PC-3 (cell line): ENCODE measurements at regions of chr6 and their contacts with region 1.

Region 1: GRCh38 chr6:148342357-148343046 is at the start of gene SASH1:
- DNase-seq: peak; percentile 75
- ATAC-seq: peak; percentile 81
- H3K4me3 ChIP-seq: peak within 1 kb of the TSS; percentile 78
- H3K27ac ChIP-seq: peak within 1 kb of the TSS; percentile 92
- H3K4me1 ChIP-seq: peaks cover 16% of the 10 kb centered on the region
- H3K27me3 ChIP-seq: no peaks in the 10 kb centered on the region
- CTCF ChIP-seq: no peak
- total RNA-seq, gene SASH1: 9.8 and 10.5 TPM in 2 replicates

Region 2: GRCh38 chr6:148192310-148192709 is 150.2 kb before region 1 on chr6:
- CTCF ChIA-PET with region 1: no interaction called
- POLR2A ChIA-PET with region 1: no interaction called
- intact Hi-C with region 1: loop called (anchors 10 kb)
- DNase-seq: peak; percentile 76
- ATAC-seq: peak; percentile 80
- H3K4me3 ChIP-seq: peak overlapping the region; percentile 58
- H3K27ac ChIP-seq: peak overlapping the region; percentile 89
- H3K4me1 ChIP-seq: peaks cover 41% of the 10 kb centered on the region
- H3K27me3 ChIP-seq: no peaks in the 10 kb centered on the region
- CTCF ChIP-seq: no peak

Region 3: DNA sequence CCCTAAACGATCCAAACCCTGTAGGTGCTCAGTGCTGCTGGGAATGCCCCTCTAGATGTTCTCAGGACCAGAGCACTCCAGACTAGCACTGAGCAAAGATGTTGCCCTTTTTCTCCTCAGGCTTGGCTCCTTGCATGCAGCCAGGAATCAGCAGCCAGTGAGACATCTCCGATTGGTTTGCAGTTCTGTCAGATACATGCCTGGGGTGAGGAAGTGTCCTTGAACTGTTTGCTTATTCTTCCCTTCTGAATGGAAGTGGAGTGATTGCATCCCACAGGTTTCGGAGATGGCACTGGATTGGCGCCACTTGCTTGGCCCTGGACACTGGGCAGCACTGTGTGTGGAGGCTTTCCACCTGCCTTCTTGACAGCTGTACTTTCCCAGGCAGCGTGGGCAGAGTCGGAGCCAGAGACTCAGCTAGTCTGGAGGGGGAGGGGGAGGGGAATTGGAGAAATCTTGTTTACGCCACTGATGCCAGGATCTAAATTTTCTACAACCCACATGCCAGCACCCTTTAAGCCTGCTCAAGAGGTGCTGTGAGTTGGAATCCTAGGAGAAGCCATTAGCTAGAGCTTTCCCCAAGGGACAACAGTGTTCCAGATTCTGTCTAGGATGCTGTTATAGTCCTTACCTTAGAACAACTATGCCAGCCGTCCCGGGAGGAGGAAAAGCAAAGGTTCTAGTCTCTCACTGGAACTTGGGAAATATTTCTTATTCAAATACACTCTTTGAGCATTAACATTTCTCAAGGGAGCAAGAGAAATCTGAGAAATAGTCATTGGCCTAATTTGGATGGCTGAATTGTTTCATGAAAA is 49.1 kb before region 1 on chr6:
- CTCF ChIA-PET with region 1: no interaction called
- POLR2A ChIA-PET with region 1: no interaction called
- intact Hi-C with region 1: no loop called
- DNase-seq: no peak
- ATAC-seq: no peak
- H3K4me3 ChIP-seq: no peak overlapping the region
- H3K27ac ChIP-seq: no peak overlapping the region
- H3K4me1 ChIP-seq: no peaks in the 10 kb centered on the region
- H3K27me3 ChIP-seq: no peaks in the 10 kb centered on the region
- CTCF ChIP-seq: no peak

Region 4: DNA sequence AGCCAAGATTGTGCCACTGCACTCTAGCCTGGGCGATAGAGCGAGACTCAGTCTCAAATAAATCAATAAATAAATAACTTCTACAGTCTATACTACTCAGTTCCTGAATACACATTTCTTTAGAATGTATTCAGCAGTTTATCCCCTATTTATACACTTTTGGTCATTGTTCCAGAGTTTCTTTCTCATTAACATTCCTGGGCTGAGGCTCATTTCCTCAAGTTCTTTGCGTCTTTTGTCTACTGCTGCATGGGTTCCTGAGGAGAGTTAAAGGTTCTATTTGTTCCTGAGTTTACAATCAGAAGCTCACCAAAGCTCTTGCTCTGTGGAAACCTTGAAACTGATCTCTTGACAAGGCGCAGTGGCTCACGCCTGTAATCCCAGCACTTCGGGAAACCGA is 37.5 kb before region 1 on chr6:
- CTCF ChIA-PET with region 1: interaction called, 3 read pairs
- POLR2A ChIA-PET with region 1: no interaction called
- intact Hi-C with region 1: loop called (anchors 2 kb)
- DNase-seq: peak; percentile 81
- ATAC-seq: peak; percentile 74
- H3K4me3 ChIP-seq: no peak overlapping the region
- H3K27ac ChIP-seq: peak overlapping the region; percentile 71
- H3K4me1 ChIP-seq: peaks cover 22% of the 10 kb centered on the region
- H3K27me3 ChIP-seq: no peaks in the 10 kb centered on the region
- CTCF ChIP-seq: no peak

Region 5: GRCh38 chr6:148464319-148465010 is 122.0 kb after region 1 on chr6:
- CTCF ChIA-PET with region 1: no interaction called
- POLR2A ChIA-PET with region 1: no interaction called
- intact Hi-C with region 1: loop called (anchors 2 kb)
- DNase-seq: peak; percentile 79
- ATAC-seq: peak; percentile 70
- H3K4me3 ChIP-seq: no peak overlapping the region
- H3K27ac ChIP-seq: no peak overlapping the region
- H3K4me1 ChIP-seq: peaks cover 3% of the 10 kb centered on the region; the same call in 1 of the 2 replicates
- H3K27me3 ChIP-seq: no peaks in the 10 kb centered on the region
- CTCF ChIP-seq: peak; percentile 91

Region 6: DNA sequence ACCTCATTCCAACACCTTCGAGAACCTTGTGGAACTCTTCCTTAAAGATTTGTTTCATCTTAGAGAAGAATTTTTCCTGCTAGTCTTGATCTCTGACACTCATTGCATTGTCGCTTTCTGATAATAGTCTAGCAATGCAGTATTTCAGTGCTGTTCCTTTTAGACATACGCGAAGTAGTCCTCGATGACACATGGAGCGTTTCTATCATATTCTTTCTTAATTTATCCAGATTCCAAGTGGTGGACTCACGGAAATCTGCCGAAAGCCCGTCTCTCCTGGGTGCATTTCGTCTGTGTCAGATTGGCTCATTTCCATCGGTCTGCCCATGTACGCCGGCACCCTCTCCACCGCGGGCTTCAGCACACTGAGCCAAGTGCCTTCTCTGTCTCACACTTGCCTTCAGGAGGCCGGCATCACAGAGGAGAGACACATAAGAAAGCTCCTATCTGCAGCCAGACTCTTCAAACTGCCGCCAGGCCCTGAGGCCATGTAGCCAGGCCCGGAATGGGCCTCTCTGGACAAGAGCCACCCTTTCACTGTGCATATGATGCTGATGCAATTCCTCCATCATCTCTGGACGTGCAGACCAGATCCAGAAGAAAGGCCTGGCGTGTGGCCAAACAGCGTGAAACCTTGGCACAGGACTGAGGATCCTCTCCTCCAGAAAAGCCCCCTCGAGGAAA is 205.7 kb after region 1 on chr6:
- CTCF ChIA-PET with region 1: no interaction called
- POLR2A ChIA-PET with region 1: interaction called, 19 read pairs
- intact Hi-C with region 1: no loop called
- DNase-seq: no peak
- ATAC-seq: no peak
- H3K4me3 ChIP-seq: no peak overlapping the region
- H3K27ac ChIP-seq: no peak overlapping the region
- H3K4me1 ChIP-seq: no peaks in the 10 kb centered on the region
- H3K27me3 ChIP-seq: no peaks in the 10 kb centered on the region
- CTCF ChIP-seq: no peak